ENCODE measurements at regions of chr10 and their contacts with region 1.

Region 1: DNA sequence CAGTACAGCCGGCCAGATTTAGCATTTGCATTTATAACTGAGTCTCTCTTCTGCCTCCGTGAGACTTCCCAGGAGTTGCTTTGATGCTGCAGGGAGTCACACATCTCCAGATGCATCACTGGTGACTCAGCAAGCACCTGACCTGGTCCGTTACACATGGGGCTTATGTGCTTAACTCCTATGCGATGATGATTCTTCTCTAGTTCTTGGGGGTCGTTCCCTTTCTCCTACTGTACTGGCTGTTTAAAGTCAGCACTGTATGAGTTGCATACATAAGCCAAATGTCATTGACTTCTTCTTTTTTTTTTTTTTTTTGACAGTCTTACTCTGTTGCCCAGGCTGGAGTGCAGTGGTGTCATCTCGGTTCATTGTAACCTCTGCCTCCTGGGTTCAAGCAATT is 13.0 kb upstream of the AKR1E2 start:
- DNase-seq: no peak
- H3K4me3 ChIP-seq: no peak overlapping the region
- H3K4me3 Mint-ChIP-seq: no peak overlapping the region
- H3K27ac Mint-ChIP-seq: no peak overlapping the region
- H3K4me1 ChIP-seq: peaks cover 11% of the 10 kb centered on the region; the same call in 1 of the 2 replicates
- H3K4me1 Mint-ChIP-seq: no peaks in the 10 kb centered on the region
- H3K27me3 ChIP-seq: no peaks in the 10 kb centered on the region
- H3K27me3 Mint-ChIP-seq: no peaks in the 10 kb centered on the region
- CTCF ChIP-seq: no peak

Region 2: DNA sequence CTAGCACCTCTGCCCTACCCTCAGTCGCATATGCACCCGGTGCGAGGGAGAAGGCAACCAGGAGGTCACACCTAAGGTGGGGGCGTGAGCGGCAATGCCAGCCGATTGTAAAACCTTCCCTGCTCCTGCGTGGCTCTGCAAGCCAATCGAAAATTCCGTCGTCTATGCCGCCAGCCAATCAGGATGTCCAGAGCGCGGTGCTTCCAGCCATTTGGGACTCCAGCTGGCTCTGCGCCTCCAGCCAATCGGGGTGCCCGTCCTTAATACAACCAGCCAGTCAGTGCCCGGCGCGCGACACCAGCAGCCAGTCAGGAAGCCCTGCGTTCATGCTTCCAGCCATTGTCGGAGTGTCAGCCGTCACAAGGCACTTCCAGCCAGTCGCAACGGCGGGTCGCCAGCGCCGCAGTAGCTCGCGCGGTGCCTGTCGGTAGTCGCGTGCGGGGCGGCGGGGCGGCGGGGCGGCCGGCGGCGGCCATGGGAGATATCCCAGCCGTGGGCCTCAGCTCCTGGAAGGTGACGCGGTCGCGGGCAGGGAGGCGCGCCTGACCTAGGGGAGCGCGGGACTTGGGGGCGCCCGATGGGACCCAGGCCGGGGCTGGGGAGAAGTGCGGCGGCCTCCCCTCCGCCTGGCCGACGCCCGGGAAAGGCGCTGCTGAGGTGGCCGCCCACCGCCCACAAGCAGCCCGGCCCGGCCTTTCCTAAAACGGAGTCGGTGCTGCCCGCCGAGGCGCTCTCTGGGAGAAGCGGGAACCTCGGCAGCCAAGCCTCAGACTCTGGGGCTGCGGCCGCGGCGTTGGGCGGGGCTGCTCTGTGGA is 13.0 kb after region 1 on chr10 and contains the start of gene AKR1E2:
- CTCF ChIA-PET with region 1: interaction called, 52 read pairs
- POLR2A ChIA-PET with region 1: interaction called, 4 read pairs
- intact Hi-C with region 1: loop called (anchors 1 kb)
- DNase-seq: peak; percentile 100
- H3K4me3 ChIP-seq: peak within 1 kb of the TSS; percentile 56
- H3K4me3 Mint-ChIP-seq: peak within 1 kb of the TSS; percentile 98
- H3K27ac Mint-ChIP-seq: peak within 1 kb of the TSS; percentile 94
- H3K4me1 ChIP-seq: peaks cover 19% of the 10 kb centered on the region
- H3K4me1 Mint-ChIP-seq: peaks cover 12% of the 10 kb centered on the region
- H3K27me3 ChIP-seq: no peaks in the 10 kb centered on the region
- H3K27me3 Mint-ChIP-seq: peaks cover 5% of the 10 kb centered on the region
- CTCF ChIP-seq: no peak
- total RNA-seq, gene AKR1E2: 68.3 and 68.5 TPM in 2 replicates

Region 3: DNA sequence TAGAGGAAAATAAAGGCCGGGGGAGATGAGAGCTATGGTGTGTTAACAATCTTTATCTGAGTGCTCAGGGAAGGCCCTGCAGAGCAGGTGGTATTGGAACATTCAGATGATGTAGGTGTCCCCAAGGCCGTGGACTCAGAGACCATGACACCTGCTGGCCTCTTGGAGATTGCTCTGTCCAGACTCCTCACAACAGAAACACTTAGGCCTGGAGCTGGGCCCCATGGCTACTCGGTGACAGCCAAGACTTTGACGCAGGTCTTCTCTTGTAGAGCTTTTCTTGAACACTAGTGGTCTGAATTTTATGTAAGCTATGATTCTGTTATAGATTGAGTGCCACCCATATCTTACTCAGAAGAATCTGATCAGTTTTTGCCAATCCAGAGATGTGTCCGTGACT is 26.4 kb after region 1 on chr10:
- CTCF ChIA-PET with region 1: interaction called, 14 read pairs
- POLR2A ChIA-PET with region 1: no interaction called
- intact Hi-C with region 1: loop called (anchors 1 kb)
- DNase-seq: peak in 1 of 2 experiments; percentile 34
- H3K4me3 ChIP-seq: no peak overlapping the region
- H3K4me3 Mint-ChIP-seq: no peak overlapping the region
- H3K27ac Mint-ChIP-seq: no peak overlapping the region
- H3K4me1 ChIP-seq: no peaks in the 10 kb centered on the region
- H3K4me1 Mint-ChIP-seq: no peaks in the 10 kb centered on the region
- H3K27me3 ChIP-seq: no peaks in the 10 kb centered on the region
- H3K27me3 Mint-ChIP-seq: no peaks in the 10 kb centered on the region
- CTCF ChIP-seq: peak in 1 of 2 experiments; percentile 45

Region 4: DNA sequence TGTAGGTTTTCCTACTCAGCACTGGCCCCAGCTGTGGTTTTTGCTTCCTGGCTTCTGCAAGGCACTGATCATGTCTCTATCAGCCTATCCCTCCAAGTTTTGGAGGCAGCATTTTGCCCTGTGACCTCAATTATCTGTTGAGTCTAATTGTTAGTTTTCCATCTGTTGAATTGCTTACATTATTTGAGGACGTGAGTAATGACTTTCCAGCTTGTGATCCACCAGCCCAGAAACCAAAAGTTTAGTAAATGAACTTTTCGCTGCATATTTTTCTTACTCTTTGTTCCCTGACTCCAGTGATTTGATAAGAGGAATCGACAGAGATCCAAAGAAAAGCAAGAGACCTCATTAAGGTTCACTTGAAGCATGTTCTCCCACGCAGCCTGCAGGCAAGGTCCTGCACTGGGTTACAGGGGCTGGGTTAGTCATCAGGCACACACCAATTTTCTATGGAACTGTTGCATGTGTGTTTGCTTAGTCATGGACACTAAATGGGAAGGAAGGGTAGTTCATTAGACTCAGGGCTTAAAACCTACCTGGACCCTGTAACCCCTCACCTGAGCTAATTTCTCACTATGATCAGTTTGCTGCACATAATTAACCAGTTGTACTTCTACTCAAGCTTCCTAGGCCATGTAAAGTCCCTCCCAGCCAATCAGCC is 70.2 kb after region 1 on chr10:
- CTCF ChIA-PET with region 1: no interaction called
- POLR2A ChIA-PET with region 1: no interaction called
- intact Hi-C with region 1: no loop called
- DNase-seq: no peak
- H3K4me3 ChIP-seq: no peak overlapping the region
- H3K4me3 Mint-ChIP-seq: no peak overlapping the region
- H3K27ac Mint-ChIP-seq: no peak overlapping the region
- H3K4me1 ChIP-seq: no peaks in the 10 kb centered on the region
- H3K4me1 Mint-ChIP-seq: no peaks in the 10 kb centered on the region
- H3K27me3 ChIP-seq: no peaks in the 10 kb centered on the region
- H3K27me3 Mint-ChIP-seq: no peaks in the 10 kb centered on the region
- CTCF ChIP-seq: no peak

Region 5: GRCh38 chr10:5076615-5077014 is 263.6 kb after region 1 on chr10:
- CTCF ChIA-PET with region 1: interaction called, 11 read pairs
- POLR2A ChIA-PET with region 1: no interaction called
- intact Hi-C with region 1: no loop called
- DNase-seq: no peak
- H3K4me3 ChIP-seq: no peak overlapping the region
- H3K4me3 Mint-ChIP-seq: no peak overlapping the region
- H3K27ac Mint-ChIP-seq: no peak overlapping the region
- H3K4me1 ChIP-seq: peaks cover 53% of the 10 kb centered on the region
- H3K4me1 Mint-ChIP-seq: peaks cover 56% of the 10 kb centered on the region
- H3K27me3 ChIP-seq: no peaks in the 10 kb centered on the region
- H3K27me3 Mint-ChIP-seq: no peaks in the 10 kb centered on the region
- CTCF ChIP-seq: no peak

Region 6: DNA sequence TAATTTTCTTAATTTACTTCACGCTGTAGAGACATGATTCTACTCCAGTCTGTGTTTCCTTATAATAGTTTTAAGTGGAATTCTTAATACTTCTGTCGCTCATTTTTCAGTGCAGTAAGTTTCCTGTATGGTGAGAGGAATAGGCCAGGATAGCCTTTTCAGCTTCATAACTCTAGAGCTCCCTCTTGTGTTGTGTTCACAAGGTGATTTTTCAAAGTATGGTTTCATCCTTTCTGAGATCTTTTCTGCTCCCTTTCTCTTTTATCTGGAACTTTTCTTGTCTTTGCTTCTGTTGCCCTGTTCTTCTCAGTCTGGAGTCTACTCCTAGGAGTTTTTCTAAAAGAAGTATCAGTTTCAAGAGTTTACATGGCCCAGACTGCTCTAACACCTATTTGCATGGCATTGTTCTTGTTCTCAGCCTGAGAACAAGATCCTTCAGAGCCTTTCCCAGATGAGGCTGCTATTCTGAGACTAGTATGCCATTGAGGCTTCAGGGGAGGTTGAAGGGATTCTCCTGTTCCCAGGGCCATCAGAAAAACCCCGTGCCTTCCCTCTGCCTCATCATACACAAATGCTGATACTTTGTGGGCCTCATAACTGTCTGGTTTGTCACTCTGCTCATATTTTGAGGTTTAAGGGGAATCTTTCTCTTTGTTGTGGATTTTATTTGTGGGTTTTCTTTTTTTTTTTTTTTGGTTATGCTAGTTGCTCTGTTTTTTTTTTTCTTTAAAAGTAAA is 621.2 kb after region 1 on chr10:
- CTCF ChIA-PET with region 1: interaction called, 23 read pairs
- POLR2A ChIA-PET with region 1: no interaction called
- intact Hi-C with region 1: loop called (anchors 1 kb)
- DNase-seq: peak in 1 of 2 experiments; percentile 66
- H3K4me3 ChIP-seq: no peak overlapping the region
- H3K4me3 Mint-ChIP-seq: no peak overlapping the region
- H3K27ac Mint-ChIP-seq: no peak overlapping the region
- H3K4me1 ChIP-seq: no peaks in the 10 kb centered on the region
- H3K4me1 Mint-ChIP-seq: peaks cover 17% of the 10 kb centered on the region
- H3K27me3 ChIP-seq: no peaks in the 10 kb centered on the region
- H3K27me3 Mint-ChIP-seq: no peaks in the 10 kb centered on the region
- CTCF ChIP-seq: peak; percentile 81 to 86